ENCODE measurements at regions of chr21 and their contacts with region 1.

Region 1: DNA sequence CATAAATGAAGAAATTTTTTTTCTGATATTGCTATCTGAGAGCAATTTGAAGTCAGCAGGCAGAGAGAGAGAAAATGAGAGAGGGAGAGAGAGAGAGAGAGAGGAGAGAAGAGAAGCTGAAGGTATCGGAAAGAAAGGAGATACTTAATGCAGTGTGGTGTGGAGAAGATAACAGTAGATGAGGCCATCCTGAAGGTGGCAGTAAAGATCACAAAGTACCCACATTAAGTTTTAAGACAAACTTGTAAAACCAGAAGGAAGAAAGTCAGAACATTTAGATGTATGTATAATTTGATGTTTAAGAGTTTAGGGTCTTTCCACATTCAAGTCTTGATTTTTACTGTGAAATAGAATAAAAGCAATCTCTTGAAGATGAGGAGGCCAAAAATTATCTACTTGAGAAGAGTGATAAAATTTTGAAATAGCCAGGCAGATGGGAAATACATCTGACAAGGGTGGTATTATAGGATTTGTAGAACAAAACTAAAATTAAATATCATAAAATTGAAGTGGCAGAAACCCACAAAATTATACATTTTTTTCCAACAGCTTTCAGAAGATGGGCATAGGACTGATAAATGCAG is 1753.4 kb downstream of the MRPL39 start:
- DNase-seq: no peak
- ATAC-seq: peak; percentile 67
- H3K4me3 Mint-ChIP-seq: no peak overlapping the region
- H3K27ac Mint-ChIP-seq: no peak overlapping the region
- H3K4me1 Mint-ChIP-seq: peaks cover 15% of the 10 kb centered on the region
- H3K27me3 Mint-ChIP-seq: no peaks in the 10 kb centered on the region
- CTCF ChIP-seq: no peak

Region 2: DNA sequence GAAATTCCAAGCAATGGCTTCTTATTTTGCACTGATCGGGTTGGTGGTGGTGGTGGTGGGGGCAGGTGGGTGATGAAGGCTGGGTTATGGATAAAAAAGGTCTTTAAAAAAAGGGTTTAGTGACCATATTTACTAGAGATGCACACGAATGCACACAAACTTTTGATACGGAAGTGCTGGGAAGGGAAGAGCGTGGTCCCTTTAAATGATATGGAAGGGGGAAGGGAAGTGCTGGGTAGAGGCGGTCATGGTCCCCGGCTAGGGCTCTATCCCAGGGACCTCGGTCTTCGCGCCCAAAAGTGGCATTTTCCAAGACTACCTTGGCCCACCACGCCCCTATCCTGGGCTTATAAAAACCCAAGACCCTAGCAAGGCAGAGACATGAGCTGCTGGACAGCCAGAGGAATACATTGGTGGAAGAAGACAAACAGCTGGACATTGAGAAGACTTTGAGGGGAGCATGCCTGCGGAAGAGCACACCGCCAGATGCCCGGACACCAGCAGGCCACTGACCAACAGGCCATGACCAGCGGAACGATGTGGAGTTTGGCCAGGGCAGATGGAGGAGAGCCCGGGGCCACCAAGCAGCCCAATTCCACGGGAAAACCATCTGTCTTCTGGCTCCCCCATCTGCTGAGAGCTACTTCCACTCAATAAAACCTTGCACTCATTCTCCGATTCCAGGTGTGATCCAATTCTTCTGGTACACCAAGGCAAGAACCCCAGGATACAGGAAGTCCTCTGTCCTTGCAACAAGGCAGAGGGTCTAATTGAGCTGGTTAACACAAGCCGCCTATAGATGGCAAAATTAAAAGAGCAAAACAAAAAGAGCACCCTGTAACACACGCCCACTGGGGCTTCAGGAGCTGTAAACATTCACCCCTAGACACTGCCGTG is 33.2 kb after region 1 on chr21:
- CTCF ChIA-PET with region 1: no interaction called
- POLR2A ChIA-PET with region 1: no interaction called
- intact Hi-C with region 1: no loop called
- DNase-seq: no peak
- ATAC-seq: peak; percentile 29
- H3K4me3 Mint-ChIP-seq: peak overlapping the region; percentile 86
- H3K27ac Mint-ChIP-seq: peak overlapping the region; percentile 92
- H3K4me1 Mint-ChIP-seq: peaks cover 15% of the 10 kb centered on the region
- H3K27me3 Mint-ChIP-seq: no peaks in the 10 kb centered on the region
- CTCF ChIP-seq: no peak

Region 3: GRCh38 chr21:24045775-24046215 is 191.9 kb after region 1 on chr21:
- CTCF ChIA-PET with region 1: interaction called, 7 read pairs
- POLR2A ChIA-PET with region 1: no interaction called
- intact Hi-C with region 1: loop called (anchors 5 kb)
- DNase-seq: no peak
- ATAC-seq: no peak
- H3K4me3 Mint-ChIP-seq: peak overlapping the region; percentile 25
- H3K27ac Mint-ChIP-seq: peak overlapping the region; percentile 31
- H3K4me1 Mint-ChIP-seq: peaks cover 64% of the 10 kb centered on the region
- H3K27me3 Mint-ChIP-seq: no peaks in the 10 kb centered on the region
- CTCF ChIP-seq: no peak

Region 4: GRCh38 chr21:24276204-24276603 is 422.3 kb after region 1 on chr21:
- CTCF ChIA-PET with region 1: no interaction called
- POLR2A ChIA-PET with region 1: no interaction called
- intact Hi-C with region 1: loop called (anchors 10 kb)
- DNase-seq: no peak
- ATAC-seq: no peak
- H3K4me3 Mint-ChIP-seq: no peak overlapping the region
- H3K27ac Mint-ChIP-seq: no peak overlapping the region
- H3K4me1 Mint-ChIP-seq: peaks cover 4% of the 10 kb centered on the region
- H3K27me3 Mint-ChIP-seq: no peaks in the 10 kb centered on the region
- CTCF ChIP-seq: no peak

Region 5: DNA sequence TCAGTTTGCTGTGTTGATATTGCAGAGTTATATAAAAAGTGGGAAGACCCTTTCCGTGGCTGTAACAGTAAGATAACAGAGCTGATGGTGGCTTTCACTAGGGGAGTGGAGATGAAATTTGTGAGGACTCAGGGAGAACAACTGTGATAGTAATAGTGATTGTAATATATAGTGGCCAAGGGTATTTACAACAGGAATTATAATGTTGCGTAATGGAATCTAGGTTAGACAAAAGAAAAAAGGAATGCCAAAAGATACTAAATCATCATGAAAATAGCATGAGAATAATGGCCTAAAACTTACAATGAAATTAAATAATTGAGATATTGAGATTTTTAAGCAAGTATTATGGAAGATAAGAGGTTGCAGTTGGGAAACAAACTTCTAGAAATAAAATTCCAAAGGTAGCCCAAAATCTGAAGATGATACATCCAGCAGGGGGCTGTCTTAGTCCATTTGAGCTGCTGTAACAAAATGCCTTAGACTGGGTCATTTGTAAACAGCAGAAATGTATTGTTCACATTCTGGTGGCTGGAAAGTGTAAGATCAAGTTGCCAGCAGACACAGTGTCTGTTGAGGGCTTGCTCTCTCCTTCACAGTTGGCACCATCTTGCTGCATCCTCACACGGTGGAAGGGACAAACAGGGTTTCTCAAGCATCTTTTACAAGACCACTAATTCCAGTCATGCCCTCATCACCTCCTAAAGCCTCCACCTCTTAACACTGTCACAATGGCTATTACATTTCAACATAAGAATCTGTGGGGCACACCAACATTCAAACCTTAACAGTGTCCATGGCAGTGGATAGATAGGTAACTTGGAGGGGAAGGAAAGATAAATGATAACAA is 1042.2 kb after region 1 on chr21:
- CTCF ChIA-PET with region 1: no interaction called
- POLR2A ChIA-PET with region 1: no interaction called
- intact Hi-C with region 1: loop called (anchors 10 kb)
- DNase-seq: no peak
- ATAC-seq: peak; percentile 69
- H3K4me3 Mint-ChIP-seq: no peak overlapping the region
- H3K27ac Mint-ChIP-seq: peak overlapping the region; percentile 4
- H3K4me1 Mint-ChIP-seq: peaks cover 21% of the 10 kb centered on the region
- H3K27me3 Mint-ChIP-seq: no peaks in the 10 kb centered on the region
- CTCF ChIP-seq: no peak

Region 6: GRCh38 chr21:25313829-25314228 is 1459.9 kb after region 1 on chr21:
- CTCF ChIA-PET with region 1: no interaction called
- POLR2A ChIA-PET with region 1: no interaction called
- intact Hi-C with region 1: loop called (anchors 2 kb)
- DNase-seq: no peak
- ATAC-seq: peak; percentile 40
- H3K4me3 Mint-ChIP-seq: peak overlapping the region; percentile 62
- H3K27ac Mint-ChIP-seq: peak overlapping the region; percentile 31
- H3K4me1 Mint-ChIP-seq: peaks cover 11% of the 10 kb centered on the region
- H3K27me3 Mint-ChIP-seq: no peaks in the 10 kb centered on the region
- CTCF ChIP-seq: peak; percentile 32